WTC11 (cell line): ENCODE measurements at regions of chr2 and their contacts with region 1.

Region 1: GRCh38 chr2:54899576-54900200 is 150.6 kb downstream of the RTN4 start:
- DNase-seq: no peak
- ATAC-seq: 0 out of 2 replicates have a peak, but pooled peaks have one; percentile 34
- H3K4me3 Mint-ChIP-seq: no peak overlapping the region
- H3K27ac Mint-ChIP-seq: no peak overlapping the region
- H3K4me1 Mint-ChIP-seq: no peaks in the 10 kb centered on the region
- H3K27me3 Mint-ChIP-seq: no peaks in the 10 kb centered on the region
- CTCF ChIP-seq: no peak

Region 2: GRCh38 chr2:54927085-54927750 is 27.5 kb after region 1 on chr2:
- CTCF ChIA-PET with region 1: no interaction called
- POLR2A ChIA-PET with region 1: no interaction called
- DNase-seq: no peak
- ATAC-seq: no peak
- H3K4me3 Mint-ChIP-seq: no peak overlapping the region
- H3K27ac Mint-ChIP-seq: no peak overlapping the region
- H3K4me1 Mint-ChIP-seq: peaks cover 5% of the 10 kb centered on the region
- H3K27me3 Mint-ChIP-seq: no peaks in the 10 kb centered on the region
- CTCF ChIP-seq: no peak

Region 3: DNA sequence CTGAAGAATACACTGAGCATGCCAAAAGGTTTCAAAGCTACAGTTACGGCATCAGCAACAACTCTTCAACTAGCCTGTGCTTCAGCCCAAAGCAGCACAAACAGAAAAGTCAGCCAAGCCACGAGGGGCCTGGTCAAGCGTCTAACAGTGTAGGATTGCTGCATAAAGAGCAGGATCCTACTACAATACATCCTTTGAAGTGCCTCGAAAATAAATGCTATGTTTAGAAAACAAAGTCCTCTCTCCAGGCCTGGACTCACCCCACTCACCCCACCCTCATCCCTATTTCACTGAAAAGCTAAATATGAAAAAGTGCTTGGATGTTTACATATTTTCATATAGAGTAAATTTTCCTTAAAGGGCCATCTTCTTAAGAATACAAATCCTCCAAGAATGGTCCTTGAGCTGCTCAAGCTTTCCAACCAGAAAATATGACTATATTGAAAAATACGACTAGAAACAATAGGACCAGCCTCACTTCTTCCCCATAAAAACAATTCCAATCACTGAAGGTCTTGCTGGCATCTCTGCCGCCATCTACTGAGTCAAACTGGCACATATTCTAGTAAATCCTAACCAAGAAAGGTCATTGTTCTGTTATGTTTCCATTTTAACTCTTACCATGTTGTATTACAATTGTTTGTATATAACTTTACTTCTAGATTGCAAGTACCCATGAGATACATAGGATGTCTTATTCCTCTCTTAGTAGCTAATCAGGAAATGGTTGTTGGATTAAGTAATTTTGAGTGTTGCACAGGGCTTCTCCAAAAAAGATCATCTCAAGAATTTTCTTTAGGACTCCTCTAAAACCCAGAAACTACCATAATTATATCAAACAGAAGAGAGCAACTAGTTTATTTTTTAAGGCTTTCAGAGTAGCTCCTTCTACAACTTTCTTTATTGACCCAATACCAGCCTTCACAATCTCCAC is 268.8 kb after region 1 on chr2:
- CTCF ChIA-PET with region 1: interaction called, 36 read pairs
- POLR2A ChIA-PET with region 1: no interaction called
- DNase-seq: no peak
- ATAC-seq: 0 out of 2 replicates have a peak, but pooled peaks have one; percentile 38
- H3K4me3 Mint-ChIP-seq: no peak overlapping the region
- H3K27ac Mint-ChIP-seq: no peak overlapping the region; the same call in 1 of the 2 replicates
- H3K4me1 Mint-ChIP-seq: peaks cover 26% of the 10 kb centered on the region
- H3K27me3 Mint-ChIP-seq: no peaks in the 10 kb centered on the region
- CTCF ChIP-seq: peak; percentile 34; the same call in 1 of the 2 replicates

Region 4: DNA sequence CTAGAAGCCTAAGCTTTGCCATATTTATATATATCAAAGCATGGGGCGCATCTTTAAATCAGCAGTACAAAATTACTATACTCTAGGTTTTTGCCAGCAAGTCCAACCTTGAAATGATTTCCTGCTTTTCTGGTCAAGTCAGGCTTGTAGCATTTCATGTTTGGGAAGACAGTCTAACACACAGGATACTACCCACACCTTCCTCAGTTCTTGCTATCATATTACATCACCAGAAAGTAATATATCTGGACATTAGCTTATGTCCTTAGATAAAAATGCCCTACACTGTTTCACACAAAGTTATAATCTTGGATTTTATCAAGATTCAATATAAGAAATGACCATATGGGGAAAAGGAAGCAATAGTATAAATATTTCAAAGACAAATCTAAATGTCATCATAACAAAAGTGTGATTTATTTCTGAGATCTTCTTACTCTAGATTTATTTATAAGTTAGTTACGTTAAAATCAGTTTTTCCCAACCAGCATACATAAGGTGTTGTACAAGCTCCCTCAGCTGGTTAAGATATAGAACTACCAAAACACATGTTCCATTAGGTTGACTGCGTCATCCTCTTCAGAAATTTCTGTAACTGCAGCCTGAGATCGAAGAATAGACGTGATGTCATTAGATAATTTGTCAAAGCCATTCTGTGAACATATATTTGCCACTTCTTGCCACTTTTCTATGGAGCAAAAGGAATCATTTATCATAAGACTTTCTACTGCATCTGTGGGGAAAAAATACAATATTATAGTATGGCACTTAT is 275.8 kb after region 1 on chr2:
- CTCF ChIA-PET with region 1: interaction called, 36 read pairs
- POLR2A ChIA-PET with region 1: no interaction called
- DNase-seq: no peak
- ATAC-seq: peak; percentile 51
- H3K4me3 Mint-ChIP-seq: no peak overlapping the region
- H3K27ac Mint-ChIP-seq: no peak overlapping the region
- H3K4me1 Mint-ChIP-seq: peaks cover 14% of the 10 kb centered on the region
- H3K27me3 Mint-ChIP-seq: no peaks in the 10 kb centered on the region
- CTCF ChIP-seq: no peak